ENCODE measurements at regions of chr9 and their contacts with region 1.

Region 1: GRCh38 chr9:124617471-124618141 is 110.4 kb upstream of the NR5A1 start:
- DNase-seq: peak; percentile 43 to 62
- ATAC-seq: peak; percentile 84 to 91
- H3K4me3 ChIP-seq: no peak overlapping the region
- H3K27ac ChIP-seq: no peak overlapping the region
- H3K4me1 ChIP-seq: peaks cover 0 to 7% of the 10 kb centered on the region in 2 donors
- H3K27me3 ChIP-seq: no peaks in the 10 kb centered on the region
- CTCF ChIP-seq: peak; percentile 82 to 91 (median 89)
- POLR2A ChIP-seq: no peak

Region 2: DNA sequence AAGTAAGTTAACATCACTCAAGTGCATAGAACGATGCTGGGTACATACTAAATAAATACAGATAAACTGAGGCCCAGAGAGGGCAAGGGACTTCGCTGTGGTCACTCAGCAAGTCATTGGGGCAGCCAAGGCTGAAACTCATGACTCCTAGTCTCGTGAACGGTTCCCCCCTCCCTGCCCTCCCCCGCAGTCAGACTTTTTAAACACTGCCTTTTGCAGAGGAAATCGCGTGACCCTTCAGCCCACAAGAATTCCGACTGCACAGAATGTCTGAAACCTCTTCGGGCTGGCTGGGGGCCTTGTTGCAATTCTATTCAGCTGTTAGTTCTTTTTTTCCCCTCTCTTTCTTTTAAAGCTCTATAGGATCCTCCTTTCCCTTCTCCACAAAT is 331.7 kb before region 1 on chr9:
- in situ Hi-C with region 1: no loop called
- intact Hi-C with region 1: no loop called
- DNase-seq: peak; percentile 62 to 64
- ATAC-seq: peak; percentile 43 to 51
- H3K4me3 ChIP-seq: no peak overlapping the region
- H3K27ac ChIP-seq: peak overlapping the region; percentile 51 to 66 (median 54)
- H3K4me1 ChIP-seq: peaks cover 7 to 21% of the 10 kb centered on the region in 2 donors
- H3K27me3 ChIP-seq: no peaks in the 10 kb centered on the region
- CTCF ChIP-seq: no peak
- POLR2A ChIP-seq: no peak

Region 3: GRCh38 chr9:124708633-124709291 is 91.2 kb after region 1 on chr9:
- in situ Hi-C with region 1: loop called (anchors 5 kb)
- intact Hi-C with region 1: loop called (anchors 1 kb)
- DNase-seq: no peak
- ATAC-seq: no peak
- H3K4me3 ChIP-seq: no peak overlapping the region
- H3K27ac ChIP-seq: no peak overlapping the region
- H3K4me1 ChIP-seq: no peaks in the 10 kb centered on the region
- H3K27me3 ChIP-seq: no peaks in the 10 kb centered on the region
- CTCF ChIP-seq: no peak
- POLR2A ChIP-seq: no peak